Head of caudate nucleus (tissue), 42 donors: ENCODE measurements at regions of chr10 and their contacts with region 1.

Region 1: DNA sequence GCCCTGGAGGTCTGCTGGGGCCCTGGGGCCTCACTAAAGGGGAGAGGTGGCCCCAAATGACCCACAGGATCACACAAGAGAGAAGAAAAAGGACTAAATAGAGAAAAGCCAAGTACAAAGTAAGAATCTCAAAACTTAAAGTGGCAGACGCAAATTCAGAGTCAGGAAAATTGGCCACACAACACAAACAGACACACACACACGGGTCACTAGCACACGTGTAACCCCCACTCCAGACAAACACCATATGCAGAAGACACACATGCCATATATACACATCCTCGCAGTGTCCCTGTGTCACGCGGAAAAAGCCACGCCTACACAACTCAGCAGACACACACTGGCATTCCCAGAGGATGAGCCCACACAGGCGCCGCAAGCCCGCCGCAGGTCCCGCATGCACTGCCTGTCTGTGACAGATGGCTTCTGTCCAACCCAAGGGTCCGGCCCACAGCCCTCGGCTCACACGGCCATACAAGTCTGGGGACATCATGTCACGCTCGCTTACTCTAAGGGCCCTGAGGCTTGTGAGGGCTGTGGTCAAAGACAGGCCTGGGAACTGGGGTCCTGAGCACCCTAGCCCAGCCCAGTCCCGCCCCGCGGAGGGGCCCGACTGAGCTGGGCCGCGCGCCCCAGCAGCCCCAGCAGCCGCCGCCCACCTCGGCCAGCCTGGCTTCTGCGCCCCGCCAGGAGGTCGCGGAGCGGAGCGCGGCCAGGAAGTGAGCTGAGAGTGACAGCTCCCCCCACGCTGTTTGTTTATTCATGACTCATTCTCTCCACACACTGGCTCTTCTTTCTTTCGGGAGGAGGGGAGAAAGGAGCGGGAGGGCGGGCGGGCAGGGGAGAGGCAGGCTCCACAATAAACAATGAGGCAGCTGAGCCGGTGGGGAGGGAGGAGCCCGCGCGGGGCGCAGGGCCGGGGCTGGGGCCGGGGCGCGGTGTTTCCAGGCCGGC is 95.5 kb upstream of the ZMIZ1 start:
- DNase-seq: peak; percentile 71 to 95 (median 85)

Region 2: GRCh38 chr10:78047314-78047891 is 925.8 kb before region 1 on chr10:
- intact Hi-C with region 1: loop called (anchors 10 kb)
- DNase-seq: peak; percentile 81 to 98 (median 94)

Region 3: DNA sequence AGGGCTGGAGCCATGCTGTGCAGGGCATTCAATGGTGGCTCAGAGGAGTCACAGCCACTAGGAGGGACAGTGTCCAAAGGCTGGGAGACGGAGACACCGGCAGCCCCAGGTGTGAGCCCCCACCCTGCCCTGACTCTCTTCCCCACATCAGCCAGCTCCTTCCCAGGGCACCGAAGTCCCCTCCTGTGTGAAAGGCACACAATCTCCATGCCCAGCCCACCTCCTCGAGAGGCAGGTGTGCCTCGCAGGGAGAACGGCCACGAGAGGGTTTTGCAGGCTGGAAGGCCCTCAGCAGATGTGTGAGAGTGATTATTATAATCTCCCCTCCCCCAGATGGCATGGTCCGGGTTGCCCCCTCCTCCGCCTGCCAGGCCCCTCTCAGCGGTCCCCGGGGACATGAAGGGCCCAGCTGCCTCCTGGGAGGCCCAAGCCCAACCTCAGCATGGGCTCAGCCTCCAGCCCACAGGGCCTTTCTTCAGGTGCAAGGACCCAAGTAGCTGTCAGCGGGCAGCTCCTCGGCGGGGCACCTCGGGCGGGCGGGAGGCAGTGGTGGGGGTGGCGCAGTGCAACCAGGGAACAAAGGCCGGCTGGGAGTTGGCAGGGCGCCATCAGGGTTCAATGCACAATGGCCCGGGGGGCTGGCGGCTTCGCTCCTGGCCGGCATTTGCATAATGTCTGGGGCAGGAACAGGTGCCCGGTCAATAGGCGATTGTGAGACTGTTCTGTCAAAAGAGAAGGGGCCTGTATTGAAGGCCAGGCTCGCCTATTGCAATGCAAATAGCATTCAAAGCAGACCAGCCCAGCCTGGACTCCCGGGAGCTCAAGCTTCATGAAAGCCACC is 59.8 kb before region 1 on chr10:
- intact Hi-C with region 1: loop called (anchors 2 kb)
- DNase-seq: peak; percentile 92 to 99 (median 96)